Kidney (tissue), 22 donors: ENCODE measurements at regions of chr15 and their contacts with region 1.

Region 1: GRCh38 chr15:34099914-34100313 is 1.7 kb downstream of the EMC7 start:
- DNase-seq: no peak
- H3K4me3 ChIP-seq: no peak overlapping the region
- H3K27ac ChIP-seq: no peak overlapping the region
- H3K4me1 ChIP-seq: peaks cover 0 to 11% (median 0%) of the 10 kb centered on the region in 3 donors
- H3K27me3 ChIP-seq: no peaks in the 10 kb centered on the region
- CTCF ChIP-seq: no peak

Region 2: GRCh38 chr15:35243758-35244157 is 1143.8 kb after region 1 on chr15:
- intact Hi-C with region 1: loop called (anchors 10 kb)
- DNase-seq: no peak
- H3K4me3 ChIP-seq: no peak overlapping the region
- H3K27ac ChIP-seq: no peak overlapping the region
- H3K4me1 ChIP-seq: no peaks in the 10 kb centered on the region
- H3K27me3 ChIP-seq: no peaks in the 10 kb centered on the region
- CTCF ChIP-seq: no peak